A549 (cell line): ENCODE measurements at regions of chr22 and their contacts with region 1.

Region 1: GRCh38 chr22:32518848-32519247 is 44.2 kb downstream of the FBXO7 start:
- DNase-seq: peak in 1 of 2 experiments; percentile 25
- ATAC-seq: no peak
- H3K4me3 ChIP-seq: no peak overlapping the region
- H3K27ac ChIP-seq: no peak overlapping the region
- H3K4me1 ChIP-seq: no peaks in the 10 kb centered on the region
- CTCF ChIP-seq: peak; percentile 18; the same call in 2 of the 3 replicates
- EP300 ChIP-seq: no peak
- POLR2A ChIP-seq: no peak
- RAD21 ChIP-seq: no peak; a peak in 1 of 5 replicates

Region 2: GRCh38 chr22:32018056-32018455 is 500.8 kb before region 1 on chr22:
- CTCF ChIA-PET with region 1: no interaction called
- POLR2A ChIA-PET with region 1: interaction called, 11 read pairs
- DNase-seq: no peak
- ATAC-seq: no peak
- H3K4me3 ChIP-seq: no peak overlapping the region
- H3K27ac ChIP-seq: no peak overlapping the region
- H3K4me1 ChIP-seq: no peaks in the 10 kb centered on the region
- CTCF ChIP-seq: no peak
- EP300 ChIP-seq: no peak
- POLR2A ChIP-seq: no peak
- RAD21 ChIP-seq: no peak

Region 3: DNA sequence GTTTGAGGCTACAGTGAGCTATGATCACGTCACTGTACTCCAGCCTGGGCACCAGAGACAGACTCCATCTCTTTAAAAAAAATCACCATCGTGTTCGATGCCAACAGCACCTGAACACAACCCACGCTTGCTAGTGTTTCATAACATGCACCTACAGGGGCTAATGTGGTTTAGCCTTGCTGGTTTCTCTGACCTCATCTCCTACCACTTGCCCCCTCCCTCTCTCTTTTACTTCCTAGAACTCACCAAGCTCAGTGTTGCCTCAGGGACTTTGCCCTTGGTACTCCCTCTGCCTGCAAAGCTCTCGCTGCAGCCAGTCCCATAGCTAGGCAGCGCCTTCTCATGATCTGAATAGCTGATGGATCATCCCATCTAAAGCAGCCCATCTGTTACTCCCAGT is 55.6 kb after region 1 on chr22:
- CTCF ChIA-PET with region 1: no interaction called
- POLR2A ChIA-PET with region 1: no interaction called
- DNase-seq: no peak
- ATAC-seq: no peak
- H3K4me3 ChIP-seq: no peak overlapping the region
- H3K27ac ChIP-seq: no peak overlapping the region
- H3K4me1 ChIP-seq: no peaks in the 10 kb centered on the region
- CTCF ChIP-seq: no peak
- EP300 ChIP-seq: no peak
- POLR2A ChIP-seq: no peak
- RAD21 ChIP-seq: no peak

Region 4: DNA sequence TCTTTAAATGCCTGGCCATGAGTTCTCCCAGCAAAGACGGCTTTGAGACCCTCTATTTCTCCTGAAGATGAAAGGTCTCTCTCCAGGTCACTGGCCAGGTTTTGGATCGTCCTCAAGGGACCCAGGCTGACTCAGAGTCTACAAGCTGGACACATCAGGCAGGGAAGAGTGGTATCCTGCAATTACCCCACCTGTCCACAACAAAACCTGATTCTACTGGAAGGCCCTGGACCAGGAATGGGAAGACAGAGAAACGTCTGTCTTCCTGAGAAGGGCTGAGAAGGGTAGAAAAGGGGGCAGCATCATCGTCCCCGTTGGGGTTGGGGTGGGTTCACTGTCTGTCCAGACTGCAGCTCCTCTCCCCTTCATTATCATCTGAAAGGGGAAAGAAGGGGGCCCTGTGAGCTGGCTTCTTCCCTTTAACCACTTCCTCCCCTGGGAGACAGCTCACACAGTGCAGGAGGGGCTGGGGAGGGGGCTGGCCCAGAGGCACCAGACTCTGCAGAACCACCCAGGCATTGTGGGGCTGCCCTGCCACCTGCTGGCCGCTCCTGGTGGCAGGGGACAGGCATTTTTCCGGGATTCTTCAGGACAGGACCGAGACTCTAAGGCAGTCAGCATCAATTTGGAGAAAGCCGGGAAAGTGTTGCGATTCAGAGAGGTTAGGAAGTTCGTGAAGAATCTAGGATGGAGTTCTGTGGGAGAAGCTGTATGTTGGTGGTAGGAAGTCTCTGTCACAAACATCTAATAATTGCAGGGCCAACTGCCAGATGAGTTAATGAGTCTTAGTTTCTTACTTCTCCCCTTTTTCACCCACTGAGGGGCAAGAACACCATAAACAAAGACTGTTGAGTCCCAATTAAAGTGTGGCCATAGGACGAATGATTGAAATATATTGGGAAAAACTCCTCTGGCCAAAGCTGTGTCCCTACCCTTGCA is 481.8 kb after region 1 on chr22:
- CTCF ChIA-PET with region 1: interaction called, 17 read pairs
- POLR2A ChIA-PET with region 1: no interaction called
- DNase-seq: peak; percentile 8 to 14
- ATAC-seq: peak; percentile 86 to 90; a peak in 5 of 6 replicates
- H3K4me3 ChIP-seq: no peak overlapping the region
- H3K27ac ChIP-seq: no peak overlapping the region
- H3K4me1 ChIP-seq: no peaks in the 10 kb centered on the region
- CTCF ChIP-seq: peak; percentile 61
- EP300 ChIP-seq: no peak
- POLR2A ChIP-seq: no peak
- RAD21 ChIP-seq: peak; percentile 69 to 75